ENCODE measurements at regions of chr5 and their contacts with region 1.

Region 1: DNA sequence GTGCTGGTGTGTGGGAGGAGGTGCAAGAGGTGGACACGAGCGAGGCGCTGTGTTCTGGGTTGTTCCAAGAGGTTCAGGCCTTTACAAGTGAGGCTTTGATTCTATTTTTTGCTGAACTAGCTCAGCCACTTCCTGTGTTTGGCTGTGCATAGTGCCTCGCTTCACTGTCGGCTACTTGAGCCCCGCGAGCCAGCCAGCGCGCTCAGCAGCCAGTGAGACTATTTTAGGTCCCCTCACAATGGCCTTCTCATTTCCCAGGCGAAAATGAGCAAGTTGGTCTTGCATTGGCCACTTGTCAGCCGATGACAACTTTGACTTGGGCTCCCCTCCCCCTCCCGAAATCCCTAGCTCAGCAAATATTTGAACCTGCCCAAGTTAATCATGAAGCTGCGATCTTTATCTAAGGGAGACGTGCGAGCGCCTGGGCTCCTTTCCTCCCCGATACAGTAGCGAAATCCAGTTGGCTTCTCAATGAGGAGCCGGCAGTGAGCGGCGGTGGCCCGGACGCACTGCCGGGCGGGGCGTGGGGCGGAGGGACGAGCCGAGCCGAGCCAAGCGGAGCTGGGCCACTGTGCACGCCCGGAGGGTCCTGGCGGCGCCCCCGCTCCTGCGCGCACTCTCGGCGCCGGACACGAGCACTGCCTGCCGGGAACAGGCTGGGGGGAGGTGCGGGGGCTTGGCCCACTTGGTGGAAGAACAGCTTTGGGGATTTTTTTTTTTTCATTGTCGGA is 72.6 kb downstream of the PIK3R1 start:
- DNase-seq: peak; percentile 86
- H3K4me3 Mint-ChIP-seq: peak overlapping the region; percentile 87
- H3K27ac Mint-ChIP-seq: peak overlapping the region; percentile 88
- H3K4me1 Mint-ChIP-seq: peaks cover 61% of the 10 kb centered on the region
- H3K27me3 Mint-ChIP-seq: no peaks in the 10 kb centered on the region

Region 2: DNA sequence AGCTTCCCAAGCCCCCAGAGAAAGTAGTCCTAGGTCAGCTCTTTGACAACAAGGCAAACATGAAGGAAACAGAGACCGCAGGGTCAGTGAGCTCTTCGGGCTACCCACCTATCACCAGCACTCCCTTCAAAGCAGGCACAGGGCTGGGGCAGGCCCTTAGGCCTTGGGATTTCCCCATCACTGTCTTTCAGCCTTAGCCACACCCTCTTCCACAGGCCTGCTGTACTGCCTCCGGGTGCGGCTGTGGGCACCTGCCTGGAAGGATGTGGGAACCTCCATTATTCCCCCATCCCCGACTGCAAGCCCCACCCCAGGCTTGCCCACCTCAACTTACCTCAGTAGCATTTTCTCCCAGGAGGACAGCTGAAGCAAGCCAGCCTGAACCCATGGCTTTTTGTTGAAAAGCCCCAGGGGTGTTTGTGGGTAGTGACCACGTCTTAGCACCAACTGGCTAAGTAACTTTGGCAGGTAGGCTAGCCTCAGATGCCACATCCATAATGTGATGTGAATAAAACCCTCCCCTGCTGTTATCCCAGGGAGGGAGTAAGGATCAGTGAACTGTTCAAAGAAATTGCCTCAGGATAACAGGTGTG is 27.6 kb after region 1 on chr5:
- intact Hi-C with region 1: no loop called
- DNase-seq: peak; percentile 79
- H3K4me3 Mint-ChIP-seq: no peak overlapping the region
- H3K27ac Mint-ChIP-seq: no peak overlapping the region
- H3K4me1 Mint-ChIP-seq: peaks cover 16% of the 10 kb centered on the region
- H3K27me3 Mint-ChIP-seq: peaks cover 25% of the 10 kb centered on the region

Region 3: GRCh38 chr5:68379275-68380036 is 91.3 kb after region 1 on chr5:
- intact Hi-C with region 1: loop called (anchors 5 kb)
- DNase-seq: no peak
- H3K4me3 Mint-ChIP-seq: no peak overlapping the region
- H3K27ac Mint-ChIP-seq: peak overlapping the region; percentile 70
- H3K4me1 Mint-ChIP-seq: peaks cover 66% of the 10 kb centered on the region
- H3K27me3 Mint-ChIP-seq: peaks cover 6% of the 10 kb centered on the region

Region 4: DNA sequence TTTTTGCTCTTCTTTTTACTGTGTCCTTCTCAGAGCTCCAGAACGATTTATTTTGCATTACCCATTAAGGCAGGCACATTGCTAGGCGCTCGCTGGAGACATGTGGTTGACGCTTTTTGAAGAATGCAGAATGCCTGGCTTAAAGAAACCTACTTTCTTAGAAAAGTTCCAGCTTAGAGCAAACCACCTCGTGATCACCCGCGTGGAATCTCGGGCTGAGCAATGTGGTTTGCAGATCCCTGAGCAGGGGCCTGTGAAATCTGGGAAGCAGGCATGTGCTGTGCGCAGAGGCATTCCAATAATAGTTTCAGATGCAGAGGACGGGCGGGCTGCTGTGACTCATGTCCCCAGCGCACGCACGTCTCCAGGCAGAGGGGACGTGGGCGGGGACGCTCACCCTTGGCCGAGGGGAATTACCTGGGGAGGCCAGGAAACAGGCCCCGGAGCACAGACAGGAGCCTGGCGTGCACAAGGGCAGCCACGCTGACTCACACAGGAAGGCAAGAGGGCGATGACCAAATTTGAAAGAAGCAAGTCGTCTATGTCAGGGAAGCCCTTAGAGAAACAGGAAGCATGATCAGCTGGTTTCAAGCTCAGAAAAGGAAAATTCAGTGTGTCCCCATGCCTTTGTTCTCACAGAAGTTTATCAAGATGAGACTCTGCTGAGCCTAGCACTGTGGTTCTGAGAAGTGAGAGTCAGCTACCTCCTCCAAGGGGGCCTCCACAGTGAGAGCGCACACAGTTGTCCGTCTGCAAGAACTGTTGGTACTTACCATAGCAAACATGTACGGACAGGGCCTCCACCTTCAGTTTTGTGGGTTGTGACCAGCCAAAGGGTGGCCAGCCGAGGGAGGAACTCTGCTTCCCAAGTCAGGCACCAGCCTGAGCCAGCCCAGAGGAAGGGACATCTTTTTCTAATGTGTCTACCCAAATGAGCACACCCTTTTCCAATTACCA is 146.1 kb after region 1 on chr5:
- intact Hi-C with region 1: loop called (anchors 1 kb)
- DNase-seq: peak; percentile 96
- H3K4me3 Mint-ChIP-seq: peak overlapping the region; percentile 66
- H3K27ac Mint-ChIP-seq: peak overlapping the region; percentile 84
- H3K4me1 Mint-ChIP-seq: peaks cover 54% of the 10 kb centered on the region
- H3K27me3 Mint-ChIP-seq: peaks cover 37% of the 10 kb centered on the region

Region 5: DNA sequence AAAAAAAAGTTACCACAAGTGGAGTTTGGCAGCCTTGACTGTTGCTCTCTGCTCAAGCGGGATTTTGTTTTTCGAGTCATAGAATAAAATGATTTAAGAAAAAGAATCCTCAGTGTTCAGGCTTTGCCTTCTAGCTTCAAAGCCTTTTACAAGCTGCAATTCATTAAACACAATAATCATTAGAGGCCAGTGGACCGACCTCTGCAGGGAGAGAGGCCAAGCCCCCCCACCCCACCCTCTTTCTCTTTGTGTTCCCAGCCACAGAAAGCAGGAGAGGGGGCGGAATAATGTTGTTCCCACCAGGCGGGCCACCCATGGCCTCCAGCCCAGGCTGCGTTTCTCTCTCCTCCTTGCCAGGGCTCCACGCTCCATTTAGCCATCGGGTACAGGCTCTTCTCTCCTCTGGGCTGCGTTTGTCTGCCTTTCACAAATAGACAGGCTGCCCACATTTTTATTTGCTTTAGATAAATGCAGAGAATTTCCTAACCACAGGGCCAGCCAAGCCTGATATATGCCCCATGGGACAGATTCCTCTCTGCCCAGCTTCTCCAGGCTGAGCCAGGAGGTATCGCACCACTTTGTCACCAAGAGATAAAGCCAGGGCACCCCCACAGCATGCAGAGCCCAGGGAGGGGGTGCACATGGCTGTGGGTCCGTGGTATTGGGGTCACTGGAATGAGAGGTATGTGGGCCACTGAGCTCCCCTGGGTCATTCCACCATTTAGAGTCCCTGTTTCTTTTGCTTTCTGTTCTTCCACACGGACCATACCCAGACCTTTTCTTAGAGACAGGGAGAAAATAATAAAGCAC is 246.2 kb after region 1 on chr5:
- intact Hi-C with region 1: loop called (anchors 10 kb)
- DNase-seq: no peak
- H3K4me3 Mint-ChIP-seq: no peak overlapping the region
- H3K27ac Mint-ChIP-seq: no peak overlapping the region
- H3K4me1 Mint-ChIP-seq: no peaks in the 10 kb centered on the region
- H3K27me3 Mint-ChIP-seq: peaks cover 22% of the 10 kb centered on the region

Region 6: DNA sequence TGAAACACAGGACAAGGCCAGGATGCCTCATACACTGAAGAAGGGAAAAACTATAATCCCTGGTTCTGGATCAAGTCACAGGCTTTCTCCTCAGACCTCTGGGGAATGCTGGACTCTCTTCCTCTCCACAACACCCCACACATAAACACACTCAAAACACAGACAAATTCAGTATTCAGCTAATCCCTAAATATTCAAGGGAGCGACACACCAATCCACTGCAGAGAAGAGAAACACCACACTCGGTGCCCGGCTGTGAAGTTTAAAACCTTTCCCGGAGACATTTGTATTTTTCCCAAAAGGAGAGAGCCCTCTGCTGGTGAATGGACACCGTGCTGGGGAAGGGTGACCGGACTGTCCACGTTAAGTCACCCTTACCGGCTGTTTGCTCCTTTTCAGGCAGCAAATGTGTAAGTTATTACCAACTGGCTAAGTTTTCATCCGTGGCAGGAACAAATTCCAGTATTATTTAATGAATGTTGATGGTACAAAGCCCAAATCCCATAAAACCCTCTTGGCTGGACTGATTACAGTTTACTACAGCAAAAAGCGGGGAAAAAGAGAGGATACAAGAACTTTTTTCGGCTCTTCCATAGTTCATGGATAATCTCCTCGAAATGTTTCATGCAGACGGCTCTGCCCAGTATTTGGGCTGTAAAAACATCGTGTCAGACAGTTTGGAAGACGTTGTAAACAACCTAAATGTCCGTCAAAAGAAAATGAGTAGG is 674.8 kb after region 1 on chr5:
- intact Hi-C with region 1: loop called (anchors 1 kb)
- DNase-seq: peak; percentile 66
- H3K4me3 Mint-ChIP-seq: no peak overlapping the region
- H3K27ac Mint-ChIP-seq: no peak overlapping the region
- H3K4me1 Mint-ChIP-seq: peaks cover 3% of the 10 kb centered on the region
- H3K27me3 Mint-ChIP-seq: no peaks in the 10 kb centered on the region

Measured in activated CD4-positive, alpha-beta T cell treated with anti-CD3 and anti-CD28 coated beads, Interleukin-2, amount 10 ng/mL, durations not matched to agents 24 days and 14 days (primary cell).